ENCODE measurements at regions of chr5 and their contacts with region 1.

Region 1: GRCh38 chr5:39399135-39400036 is 25.4 kb downstream of the DAB2 start:
- DNase-seq: peak; percentile 74 to 92 (median 85)
- H3K4me3 ChIP-seq: peak overlapping the region in 4 of 7 experiments; percentile 5 to 48 (median 34)
- H3K27ac ChIP-seq: peak overlapping the region; percentile 30 to 74
- H3K4me1 ChIP-seq: peaks cover 15 to 38% (median 25%) of the 10 kb centered on the region in 4 experiments
- H3K27me3 ChIP-seq: no peaks in the 10 kb centered on the region

Region 2: DNA sequence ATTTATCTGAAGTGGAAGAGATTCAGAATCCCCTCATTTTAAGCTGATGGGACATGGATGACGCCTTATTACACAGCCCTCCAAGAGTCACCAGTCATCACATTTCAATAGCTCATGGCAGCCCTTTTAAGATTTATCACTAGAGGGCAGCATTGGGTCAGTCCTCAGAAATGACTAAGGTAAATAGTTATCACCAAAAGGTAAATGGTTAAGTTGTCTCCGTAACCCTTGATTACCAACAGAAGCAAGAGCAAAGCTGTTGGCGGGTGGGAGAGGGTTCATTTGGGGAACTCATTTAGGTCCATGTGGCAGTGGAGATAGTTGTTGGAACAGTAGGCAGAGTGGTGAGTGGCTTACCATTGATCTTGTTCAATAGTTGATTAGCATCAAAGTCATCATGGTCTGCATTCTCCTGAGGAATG is 23.1 kb before region 1 on chr5:
- CTCF ChIA-PET with region 1: interaction called, 26 read pairs
- POLR2A ChIA-PET with region 1: no interaction called
- DNase-seq: peak; percentile 62 to 81 (median 73)
- H3K4me3 ChIP-seq: no peak overlapping the region
- H3K27ac ChIP-seq: no peak overlapping the region
- H3K4me1 ChIP-seq: no peaks in the 10 kb centered on the region
- H3K27me3 ChIP-seq: no peaks in the 10 kb centered on the region

Region 3: DNA sequence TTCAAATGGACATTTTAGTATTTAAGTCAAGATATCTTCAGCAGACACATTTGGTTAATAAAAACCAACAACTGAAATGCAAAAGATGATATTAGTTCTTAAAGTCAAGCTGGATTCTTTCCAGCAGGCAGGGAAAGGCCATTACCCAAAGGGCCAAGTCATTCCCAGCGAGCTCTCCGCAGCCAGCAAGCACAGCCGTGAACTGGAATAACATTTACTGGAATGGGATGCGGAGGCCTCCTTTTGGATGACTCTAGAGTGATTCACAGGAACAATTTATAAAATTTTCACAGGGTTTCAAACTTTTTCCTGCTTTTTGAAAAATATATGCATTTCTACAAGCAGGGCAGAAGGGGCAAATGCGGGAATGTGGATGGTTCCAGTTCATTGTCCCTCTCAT is 102.0 kb after region 1 on chr5:
- CTCF ChIA-PET with region 1: no interaction called
- POLR2A ChIA-PET with region 1: no interaction called
- DNase-seq: no peak
- H3K4me3 ChIP-seq: no peak overlapping the region
- H3K27ac ChIP-seq: no peak overlapping the region
- H3K4me1 ChIP-seq: peaks cover 0 to 17% (median 10%) of the 10 kb centered on the region in 4 experiments
- H3K27me3 ChIP-seq: no peaks in the 10 kb centered on the region

Region 4: GRCh38 chr5:39555788-39556187 is 156.4 kb after region 1 on chr5:
- CTCF ChIA-PET with region 1: no interaction called
- POLR2A ChIA-PET with region 1: no interaction called
- DNase-seq: no peak
- H3K4me3 ChIP-seq: no peak overlapping the region
- H3K27ac ChIP-seq: no peak overlapping the region
- H3K4me1 ChIP-seq: no peaks in the 10 kb centered on the region
- H3K27me3 ChIP-seq: no peaks in the 10 kb centered on the region

Measured in common myeloid progenitor, CD34-positive (primary cell).